ENCODE measurements at regions of chr9 and their contacts with region 1.

Region 1: GRCh38 chr9:126228781-126229444 is 97.7 kb upstream of the MVB12B start:
- DNase-seq: no peak
- H3K4me3 ChIP-seq: no peak overlapping the region
- H3K27me3 ChIP-seq: peaks cover 15% of the 10 kb centered on the region
- CTCF ChIP-seq: peak; percentile 97

Region 2: GRCh38 chr9:125407974-125408900 is 820.7 kb before region 1 on chr9:
- CTCF ChIA-PET with region 1: interaction called, 18 read pairs
- POLR2A ChIA-PET with region 1: no interaction called
- DNase-seq: no peak
- H3K4me3 ChIP-seq: peak overlapping the region; percentile 70
- H3K27me3 ChIP-seq: no peaks in the 10 kb centered on the region; the same call in 1 of the 2 replicates
- CTCF ChIP-seq: peak; percentile 89

Region 3: GRCh38 chr9:127021664-127022363 is 792.9 kb after region 1 on chr9:
- CTCF ChIA-PET with region 1: no interaction called
- POLR2A ChIA-PET with region 1: no interaction called
- DNase-seq: peak; percentile 96
- H3K4me3 ChIP-seq: no peak overlapping the region
- H3K27me3 ChIP-seq: no peaks in the 10 kb centered on the region
- CTCF ChIP-seq: no peak